H1 (cell line): ENCODE measurements at regions of chr6 and their contacts with region 1.

Region 1: GRCh38 chr6:123715006-123715875 is 78.5 kb upstream of the TRDN start:
- DNase-seq: no peak
- H3K4me3 ChIP-seq: no peak overlapping the region
- H3K27ac ChIP-seq: no peak overlapping the region
- H3K4me1 ChIP-seq: no peaks in the 10 kb centered on the region
- H3K27me3 ChIP-seq: no peaks in the 10 kb centered on the region
- CTCF ChIP-seq: peak in 2 of 3 experiments; percentile 47 to 53; a peak in 2 of 4 replicates
- EP300 ChIP-seq: no peak
- POLR2A ChIP-seq: no peak
- RAD21 ChIP-seq: peak; percentile 75 to 77

Region 2: DNA sequence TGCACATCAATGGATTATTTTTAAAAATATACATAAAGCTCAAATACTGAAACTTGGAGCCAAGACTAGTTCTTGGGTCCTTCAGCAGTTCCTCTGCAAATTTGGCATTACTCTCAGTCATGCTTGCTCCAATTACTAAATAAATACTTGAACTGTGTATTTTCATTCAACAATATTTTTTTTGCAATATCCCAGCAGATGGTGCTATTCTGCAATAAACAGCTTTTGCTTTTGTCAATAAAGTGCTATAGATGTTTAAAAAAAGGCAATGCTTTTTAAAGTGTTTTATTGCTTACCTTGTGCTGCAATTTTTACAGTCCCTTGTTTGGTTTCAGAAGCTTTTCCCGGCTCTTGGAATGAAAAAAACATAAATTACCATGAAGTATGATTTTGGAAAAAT is 321.9 kb before region 1 on chr6:
- CTCF ChIA-PET with region 1: interaction called, 24 read pairs
- POLR2A ChIA-PET with region 1: no interaction called
- DNase-seq: no peak
- H3K4me3 ChIP-seq: no peak overlapping the region
- H3K27ac ChIP-seq: no peak overlapping the region
- H3K4me1 ChIP-seq: no peaks in the 10 kb centered on the region
- H3K27me3 ChIP-seq: no peaks in the 10 kb centered on the region
- CTCF ChIP-seq: peak in 1 of 3 experiments; percentile 26; a peak in 2 of 4 replicates
- EP300 ChIP-seq: no peak
- POLR2A ChIP-seq: no peak
- RAD21 ChIP-seq: peak; percentile 50 to 61

Region 3: GRCh38 chr6:123415844-123416468 is 299.3 kb before region 1 on chr6:
- CTCF ChIA-PET with region 1: interaction called, 56 read pairs
- POLR2A ChIA-PET with region 1: no interaction called
- DNase-seq: peak in 1 of 2 experiments; percentile 58
- H3K4me3 ChIP-seq: no peak overlapping the region
- H3K27ac ChIP-seq: no peak overlapping the region
- H3K4me1 ChIP-seq: peaks cover 0 to 5% (median 2%) of the 10 kb centered on the region in 4 experiments; a peak in 2 of 7 replicates
- H3K27me3 ChIP-seq: no peaks in the 10 kb centered on the region
- CTCF ChIP-seq: peak in 2 of 3 experiments; percentile 49 to 64; a peak in 3 of 4 replicates
- EP300 ChIP-seq: no peak
- POLR2A ChIP-seq: no peak
- RAD21 ChIP-seq: peak; percentile 82 to 83

Region 4: DNA sequence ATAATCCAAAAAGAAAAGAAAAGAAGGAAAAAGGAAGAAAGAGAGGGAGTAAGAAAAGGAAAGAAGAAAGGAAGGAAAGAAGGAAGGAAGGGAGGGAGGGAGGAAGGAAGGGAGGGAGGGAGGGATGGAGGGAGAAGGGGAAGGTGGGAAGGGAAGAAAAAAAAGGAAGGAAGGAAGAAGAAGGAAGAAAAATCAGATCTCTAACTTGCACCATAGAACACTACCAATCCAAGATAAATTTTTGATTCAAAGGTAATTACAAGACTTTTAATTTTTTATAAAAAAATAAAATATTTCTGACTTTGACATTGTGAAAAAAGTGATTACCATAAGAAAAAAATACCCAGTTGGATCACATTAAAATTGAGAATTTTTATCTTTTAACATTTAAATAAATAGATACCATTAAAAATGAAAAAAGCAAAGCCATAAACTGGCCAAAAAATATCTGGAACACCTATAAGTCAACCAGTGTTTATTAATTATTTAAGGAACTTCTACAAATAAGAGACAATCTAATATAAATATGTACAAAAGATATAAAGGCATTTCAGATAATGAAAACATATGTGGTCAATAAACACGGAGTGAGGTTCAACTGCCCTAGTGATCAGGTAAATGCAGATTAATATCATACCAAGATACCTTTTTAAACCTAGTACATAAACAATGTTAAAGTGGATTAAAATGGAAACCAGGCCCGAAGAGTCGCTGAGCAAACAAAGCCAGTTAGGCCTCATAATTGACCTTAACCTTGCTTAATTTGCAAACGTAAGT is 18.1 kb after region 1 on chr6:
- CTCF ChIA-PET with region 1: interaction called, 16 read pairs
- POLR2A ChIA-PET with region 1: no interaction called
- DNase-seq: no peak
- H3K4me3 ChIP-seq: no peak overlapping the region
- H3K27ac ChIP-seq: no peak overlapping the region
- H3K4me1 ChIP-seq: 0 out of 7 replicates have a peak, but pooled peaks cover 0 to 4% (median 0%) of the 10 kb centered on the region in 4 experiments
- H3K27me3 ChIP-seq: no peaks in the 10 kb centered on the region
- CTCF ChIP-seq: no peak
- EP300 ChIP-seq: no peak
- POLR2A ChIP-seq: no peak
- RAD21 ChIP-seq: no peak